Activated naive CD4-positive, alpha-beta T cell treated with anti-CD3 and anti-CD28 coated beads for 36 hours (primary cell): ENCODE measurements at regions of chr1 and their contacts with region 1.

Region 1: DNA sequence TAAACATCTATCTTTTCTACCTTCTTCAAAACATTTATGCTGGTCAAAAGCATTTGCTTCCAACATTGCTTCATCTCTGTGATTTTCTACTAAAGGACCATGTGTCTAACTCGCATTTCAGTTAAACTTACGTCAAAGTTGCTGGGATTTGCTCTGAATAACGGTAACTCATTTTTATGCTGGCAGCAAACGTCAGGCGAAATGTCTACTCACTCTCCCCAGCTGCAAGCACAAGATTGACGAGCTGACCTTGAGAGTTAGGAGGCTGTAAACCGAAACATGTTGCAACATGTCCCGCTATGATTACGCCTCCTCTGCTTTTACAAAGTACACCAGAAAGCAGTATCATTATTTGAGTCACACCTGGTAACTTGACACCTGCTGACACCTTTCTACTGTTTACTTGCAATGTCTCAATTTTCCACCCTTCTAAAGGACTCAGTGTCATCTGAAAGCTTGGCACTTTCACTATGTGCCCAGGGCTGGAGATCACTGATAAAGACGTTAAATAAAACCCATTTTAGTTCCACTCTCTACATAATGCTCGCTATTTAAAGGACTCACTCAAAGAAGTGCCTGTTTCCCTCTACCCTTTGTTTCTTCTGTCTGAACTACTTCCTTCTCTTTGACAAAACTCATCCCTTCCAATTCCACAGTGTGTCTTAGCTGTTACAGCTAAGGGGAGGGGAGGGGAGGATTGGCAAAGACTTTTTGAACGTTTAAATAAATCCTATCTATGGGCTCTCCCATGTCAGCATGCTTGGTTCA is 111.9 kb downstream of the PTPN14 start:
- DNase-seq: peak; percentile 85
- H3K4me3 Mint-ChIP-seq: peak overlapping the region; percentile 16
- H3K27ac Mint-ChIP-seq: peak overlapping the region; percentile 93
- H3K4me1 Mint-ChIP-seq: peaks cover 49% of the 10 kb centered on the region
- H3K27me3 Mint-ChIP-seq: peaks cover 2% of the 10 kb centered on the region

Region 2: DNA sequence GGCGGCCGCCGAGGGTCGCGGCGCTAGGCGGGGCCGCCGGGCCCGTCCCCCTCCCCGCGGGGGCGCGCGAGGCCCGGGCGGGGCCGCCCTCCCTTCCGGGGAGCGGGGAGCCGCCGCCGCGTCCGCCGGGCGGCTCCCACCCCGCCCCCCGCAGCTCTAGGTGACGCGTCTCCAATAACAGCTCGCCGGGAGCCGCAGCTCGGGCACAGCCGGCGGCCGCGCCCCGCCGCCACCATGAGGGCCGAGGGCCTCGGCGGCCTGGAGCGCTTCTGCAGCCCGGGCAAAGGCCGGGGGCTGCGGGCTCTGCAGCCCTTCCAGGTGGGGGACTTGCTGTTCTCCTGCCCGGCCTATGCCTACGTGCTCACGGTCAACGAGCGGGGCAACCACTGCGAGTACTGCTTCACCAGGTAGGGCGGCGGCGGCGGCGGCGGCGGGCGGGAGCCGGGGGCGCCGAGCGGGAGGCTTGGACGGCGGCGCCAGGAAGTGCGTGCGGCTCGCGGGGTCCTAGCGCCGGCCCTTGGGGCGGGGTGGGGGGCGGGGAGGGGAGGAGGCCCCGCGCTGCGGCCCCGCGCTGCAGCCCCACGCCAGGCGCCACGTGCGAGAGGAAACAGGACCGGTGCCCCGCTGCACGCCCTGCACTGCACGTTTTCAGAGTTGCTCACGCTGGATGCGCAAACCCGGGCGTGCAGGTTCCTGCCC is 158.4 kb before region 1 on chr1 and contains the start of gene SMYD2:
- CTCF ChIA-PET with region 1: no interaction called
- intact Hi-C with region 1: loop called (anchors 1 kb)
- DNase-seq: peak; percentile 66
- H3K4me3 Mint-ChIP-seq: peak within 1 kb of the TSS; percentile 87
- H3K27ac Mint-ChIP-seq: peak within 1 kb of the TSS; percentile 74
- H3K4me1 Mint-ChIP-seq: peaks cover 40% of the 10 kb centered on the region
- H3K27me3 Mint-ChIP-seq: no peaks in the 10 kb centered on the region
- total RNA-seq, gene SMYD2: 33.4 to 38.4 TPM

Region 3: DNA sequence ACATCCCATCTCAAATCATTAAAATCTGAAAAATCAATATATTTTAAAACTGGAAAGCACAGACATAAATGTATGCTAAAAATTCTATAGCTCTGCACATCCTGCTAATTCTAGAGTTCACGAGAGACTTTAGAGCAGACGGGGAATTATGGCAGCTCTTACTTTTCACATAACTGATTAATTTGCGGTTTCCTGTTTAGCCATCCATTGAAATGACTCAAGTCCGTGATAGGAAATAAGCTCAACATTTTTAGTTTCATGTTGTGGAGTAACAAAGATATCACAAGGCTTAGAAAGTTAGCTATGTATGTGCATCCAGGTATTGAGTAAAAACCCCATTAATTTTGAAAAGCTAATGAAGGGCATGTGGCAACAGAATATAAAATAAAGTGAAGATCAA is 35.4 kb before region 1 on chr1:
- CTCF ChIA-PET with region 1: no interaction called
- intact Hi-C with region 1: loop called (anchors 2 kb)
- DNase-seq: no peak
- H3K4me3 Mint-ChIP-seq: no peak overlapping the region
- H3K27ac Mint-ChIP-seq: peak overlapping the region; percentile 31
- H3K4me1 Mint-ChIP-seq: peaks cover 9% of the 10 kb centered on the region
- H3K27me3 Mint-ChIP-seq: no peaks in the 10 kb centered on the region

Region 4: DNA sequence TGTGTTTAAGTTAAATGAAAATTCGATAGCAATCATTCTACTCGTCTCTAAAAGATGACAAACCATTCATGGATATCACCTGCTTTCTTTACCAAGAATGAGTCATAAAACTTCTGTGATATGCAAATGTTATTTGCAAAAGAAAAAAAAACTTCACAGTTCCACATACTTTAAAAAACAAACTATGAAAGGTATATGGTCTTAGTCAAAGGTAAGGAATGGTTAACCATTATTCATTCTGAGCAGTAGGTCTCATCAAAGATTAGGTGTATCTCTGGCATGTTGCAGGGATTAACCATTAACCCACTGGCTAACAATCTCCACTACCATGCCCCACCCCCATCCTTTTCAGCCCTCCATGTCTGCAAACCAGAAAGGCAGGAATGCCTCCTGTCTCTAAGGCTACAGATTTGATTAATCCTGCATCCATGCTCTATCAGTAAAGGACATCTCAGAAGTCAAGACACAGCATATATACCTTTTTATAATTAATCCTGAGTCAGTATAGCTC is 67.5 kb after region 1 on chr1:
- CTCF ChIA-PET with region 1: no interaction called
- intact Hi-C with region 1: loop called (anchors 2 kb)
- DNase-seq: peak; percentile 6
- H3K4me3 Mint-ChIP-seq: no peak overlapping the region
- H3K27ac Mint-ChIP-seq: no peak overlapping the region
- H3K4me1 Mint-ChIP-seq: peaks cover 8% of the 10 kb centered on the region
- H3K27me3 Mint-ChIP-seq: peaks cover 3% of the 10 kb centered on the region

Region 5: DNA sequence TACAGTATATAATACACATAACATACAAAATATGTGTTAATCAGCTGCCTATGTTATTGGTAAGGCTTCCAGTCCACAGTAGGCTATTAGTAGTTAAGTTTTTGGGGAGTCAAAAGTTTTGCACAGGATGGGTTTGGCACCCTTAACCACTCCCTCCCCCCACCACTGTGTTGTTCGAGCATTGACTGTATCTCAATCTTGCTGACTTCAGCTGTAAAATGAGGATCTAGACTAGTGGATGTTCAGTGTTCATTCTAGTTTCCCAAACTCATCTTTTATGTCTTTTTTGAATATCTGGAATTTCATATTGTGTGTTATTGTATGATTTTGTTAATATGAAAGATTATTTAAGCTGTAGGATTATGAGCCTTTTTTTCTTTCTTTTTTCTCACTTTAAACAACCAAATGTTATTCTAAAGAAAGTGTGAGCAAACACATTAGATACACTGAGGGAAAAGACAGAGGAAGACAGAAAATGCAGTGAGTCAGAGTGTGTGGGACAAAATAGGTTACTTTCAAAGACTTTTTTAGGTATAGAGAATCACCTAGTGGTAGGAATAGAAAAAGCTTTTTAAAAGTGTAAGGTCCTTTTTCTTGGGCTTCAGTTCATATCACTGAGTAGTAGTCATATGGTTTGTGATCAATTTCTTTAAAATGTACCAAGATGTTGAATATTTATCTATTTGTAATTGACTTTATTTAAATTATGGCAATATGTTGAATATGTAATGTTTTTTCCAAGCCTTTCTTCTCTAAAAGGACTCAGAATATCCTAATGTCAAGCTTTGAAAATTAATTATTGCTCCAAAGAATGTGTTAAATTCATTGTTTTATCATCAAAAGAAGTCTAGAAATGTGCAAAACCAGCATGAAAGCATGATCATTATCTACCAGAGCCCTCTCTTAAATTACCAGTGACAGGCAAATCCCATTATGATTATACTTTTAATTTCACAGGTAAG is 145.6 kb after region 1 on chr1:
- CTCF ChIA-PET with region 1: interaction called, 6 read pairs
- intact Hi-C with region 1: loop called (anchors 1 kb)
- DNase-seq: no peak
- H3K4me3 Mint-ChIP-seq: no peak overlapping the region
- H3K27ac Mint-ChIP-seq: no peak overlapping the region
- H3K4me1 Mint-ChIP-seq: peaks cover 2% of the 10 kb centered on the region
- H3K27me3 Mint-ChIP-seq: no peaks in the 10 kb centered on the region

Region 6: GRCh38 chr1:214637722-214638458 is 198.4 kb after region 1 on chr1:
- CTCF ChIA-PET with region 1: no interaction called
- intact Hi-C with region 1: loop called (anchors 1 kb)
- DNase-seq: peak; percentile 32
- H3K4me3 Mint-ChIP-seq: no peak overlapping the region
- H3K27ac Mint-ChIP-seq: peak overlapping the region; percentile 37
- H3K4me1 Mint-ChIP-seq: peaks cover 38% of the 10 kb centered on the region
- H3K27me3 Mint-ChIP-seq: no peaks in the 10 kb centered on the region